ENCODE measurements at regions of chr11 and their contacts with region 1.

Region 1: GRCh38 chr11:39374963-39375698 is 2084.3 kb downstream of the LRRC4C start:
- DNase-seq: no peak
- ATAC-seq: peak; percentile 33
- H3K4me3 Mint-ChIP-seq: no peak overlapping the region
- H3K27ac Mint-ChIP-seq: no peak overlapping the region
- H3K4me1 Mint-ChIP-seq: peaks cover 19% of the 10 kb centered on the region
- H3K27me3 Mint-ChIP-seq: no peaks in the 10 kb centered on the region

Region 2: DNA sequence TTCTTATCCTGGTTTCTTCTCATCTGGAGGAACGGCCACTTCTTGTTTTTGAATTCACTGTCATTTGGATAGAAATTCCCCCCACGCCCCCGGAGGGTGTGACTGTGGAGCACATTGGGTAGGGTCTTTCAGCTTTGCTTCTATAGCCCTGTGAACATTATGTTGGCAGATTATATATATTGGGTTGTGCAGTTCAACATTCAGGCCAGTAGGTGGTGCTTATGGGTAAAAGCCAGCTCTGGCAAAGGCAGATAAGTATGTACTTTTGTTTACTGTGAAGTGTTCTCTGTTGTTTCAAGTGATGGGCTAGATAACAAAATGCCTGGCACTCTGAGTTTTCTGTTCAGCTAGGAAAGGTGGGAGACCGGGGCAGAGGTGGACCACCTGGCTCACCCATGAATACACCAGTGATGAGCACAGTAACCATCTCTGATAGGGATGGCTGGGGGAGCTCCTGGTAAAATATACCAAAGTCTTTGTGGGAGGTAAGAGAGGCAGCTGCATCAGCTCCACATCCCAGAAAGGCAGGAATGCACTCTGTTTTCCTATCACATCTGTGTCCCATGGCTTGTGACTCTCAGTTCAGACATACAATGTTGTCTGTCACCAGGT is 1428.9 kb before region 1 on chr11:
- CTCF ChIA-PET with region 1: no interaction called
- POLR2A ChIA-PET with region 1: no interaction called
- intact Hi-C with region 1: loop called in 1 of 2 experiments (anchors 10 kb)
- DNase-seq: peak; percentile 30
- ATAC-seq: no peak
- H3K4me3 Mint-ChIP-seq: no peak overlapping the region
- H3K27ac Mint-ChIP-seq: no peak overlapping the region
- H3K4me1 Mint-ChIP-seq: no peaks in the 10 kb centered on the region
- H3K27me3 Mint-ChIP-seq: no peaks in the 10 kb centered on the region

Region 3: DNA sequence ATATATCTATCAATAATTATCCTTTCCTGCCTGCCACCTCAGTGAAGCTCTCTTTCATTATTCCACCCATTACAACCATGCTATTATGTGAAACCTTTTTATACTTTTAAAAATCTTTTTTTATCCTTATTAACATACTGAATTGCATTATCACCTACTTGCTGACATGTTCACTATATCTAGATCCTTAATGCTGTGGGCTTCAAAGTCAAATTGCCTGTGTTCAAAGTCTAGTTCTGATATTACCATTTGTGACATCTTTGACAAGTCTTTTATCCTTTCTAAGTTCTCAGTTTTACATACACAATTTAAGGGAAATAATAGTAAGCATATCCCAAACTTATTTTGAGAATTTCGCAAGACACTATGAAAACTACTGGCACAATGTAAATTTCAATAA is 155.1 kb before region 1 on chr11:
- CTCF ChIA-PET with region 1: no interaction called
- POLR2A ChIA-PET with region 1: no interaction called
- intact Hi-C with region 1: no loop called
- DNase-seq: no peak
- ATAC-seq: no peak
- H3K4me3 Mint-ChIP-seq: no peak overlapping the region
- H3K27ac Mint-ChIP-seq: no peak overlapping the region
- H3K4me1 Mint-ChIP-seq: no peaks in the 10 kb centered on the region
- H3K27me3 Mint-ChIP-seq: no peaks in the 10 kb centered on the region

Region 4: DNA sequence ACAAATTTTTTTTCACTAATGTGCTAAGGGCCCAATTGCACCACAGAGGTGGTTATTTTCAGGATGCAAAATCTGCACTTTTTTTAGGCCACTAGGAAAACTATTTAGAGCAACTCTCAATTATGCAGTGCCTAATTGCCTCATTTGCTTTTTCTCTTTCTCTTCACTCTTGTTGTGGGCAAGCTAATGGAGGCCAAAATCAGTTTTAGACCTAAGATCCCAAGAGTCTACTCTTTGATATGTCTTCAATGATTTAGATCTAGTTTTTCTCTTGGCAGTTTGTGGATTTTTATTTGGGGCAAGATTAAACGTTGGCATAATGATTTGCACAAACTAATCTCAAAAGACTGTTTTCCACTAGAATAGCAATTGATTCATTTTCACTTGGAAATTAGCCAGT is 87.4 kb after region 1 on chr11:
- CTCF ChIA-PET with region 1: no interaction called
- POLR2A ChIA-PET with region 1: no interaction called
- intact Hi-C with region 1: no loop called
- DNase-seq: no peak
- ATAC-seq: no peak
- H3K4me3 Mint-ChIP-seq: no peak overlapping the region
- H3K27ac Mint-ChIP-seq: no peak overlapping the region
- H3K4me1 Mint-ChIP-seq: no peaks in the 10 kb centered on the region
- H3K27me3 Mint-ChIP-seq: no peaks in the 10 kb centered on the region

Region 5: DNA sequence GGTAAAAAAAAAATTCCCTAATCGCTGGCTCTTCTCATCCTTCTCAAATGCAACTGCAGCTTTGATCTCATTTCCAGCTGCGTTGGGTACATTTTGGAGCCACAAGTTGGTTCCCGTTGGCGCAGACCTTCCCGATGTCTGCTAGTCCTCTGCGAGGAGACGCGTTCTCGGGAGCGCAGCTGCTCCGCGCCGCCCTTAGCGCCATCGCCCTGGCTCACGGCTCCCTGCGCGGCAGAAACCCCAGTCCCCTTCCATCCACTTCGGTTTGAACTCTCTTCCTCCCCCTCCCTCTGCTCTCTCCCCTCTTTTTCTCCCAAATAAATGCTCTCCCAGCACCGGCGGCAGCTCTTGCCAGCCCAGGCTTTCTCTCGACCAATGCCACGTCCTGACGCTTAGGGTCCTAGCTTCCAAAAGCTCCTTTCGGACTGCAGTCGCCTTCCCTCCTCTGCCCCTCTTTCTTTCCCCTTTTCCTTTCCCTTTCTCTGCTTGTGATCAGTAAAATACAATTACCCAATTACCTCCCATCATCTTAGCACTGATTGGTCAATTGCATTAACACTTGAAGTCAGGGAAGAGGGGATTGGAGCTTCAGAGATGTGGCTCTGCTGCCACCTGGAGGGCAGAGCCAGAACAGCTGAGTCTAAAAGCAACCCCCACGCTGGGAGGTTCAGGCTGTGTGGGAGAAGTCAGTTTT is 918.7 kb after region 1 on chr11:
- CTCF ChIA-PET with region 1: no interaction called
- POLR2A ChIA-PET with region 1: no interaction called
- intact Hi-C with region 1: loop called in 1 of 2 experiments (anchors 5 kb)
- DNase-seq: peak; percentile 61
- ATAC-seq: peak; percentile 81
- H3K4me3 Mint-ChIP-seq: peak overlapping the region; percentile 27
- H3K27ac Mint-ChIP-seq: no peak overlapping the region
- H3K4me1 Mint-ChIP-seq: peaks cover 8% of the 10 kb centered on the region
- H3K27me3 Mint-ChIP-seq: peaks cover 18% of the 10 kb centered on the region

Region 6: DNA sequence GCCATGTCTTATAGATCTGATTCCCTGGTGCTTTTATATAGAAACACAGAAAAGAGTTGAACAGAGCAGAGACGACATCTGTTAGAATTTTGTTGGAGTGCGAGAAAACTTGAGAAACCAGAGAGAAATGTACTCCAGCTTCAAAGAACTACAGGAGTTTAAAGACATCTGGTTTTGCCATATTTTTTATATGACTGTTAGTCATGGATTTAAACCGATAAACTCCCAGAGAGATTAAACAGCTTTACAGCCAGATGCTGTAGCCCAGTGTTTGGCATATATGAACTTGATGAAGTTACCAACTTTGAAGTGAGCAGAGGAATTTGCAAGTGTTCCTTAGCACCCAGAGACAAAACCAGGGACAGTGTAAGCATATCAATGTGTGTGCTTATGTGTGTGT is 1001.2 kb after region 1 on chr11:
- CTCF ChIA-PET with region 1: no interaction called
- POLR2A ChIA-PET with region 1: no interaction called
- intact Hi-C with region 1: no loop called
- DNase-seq: no peak
- ATAC-seq: no peak
- H3K4me3 Mint-ChIP-seq: no peak overlapping the region
- H3K27ac Mint-ChIP-seq: no peak overlapping the region
- H3K4me1 Mint-ChIP-seq: no peaks in the 10 kb centered on the region
- H3K27me3 Mint-ChIP-seq: no peaks in the 10 kb centered on the region

Measured in activated CD4-positive, alpha-beta T cell treated with anti-CD3 and anti-CD28 coated beads for 36 hours (primary cell).